K562 (cell line): ENCODE measurements at regions of chr11 and their contacts with region 1.

Region 1: GRCh38 chr11:74570266-74571061 is 21.9 kb upstream of the POLD3 start:
- DNase-seq: peak; percentile 67 to 74 (median 70)
- ATAC-seq: peak; percentile 96
- H3K4me3 ChIP-seq: no peak overlapping the region
- H3K27ac ChIP-seq: no peak overlapping the region
- H3K4me1 ChIP-seq: no peaks in the 10 kb centered on the region
- H3K27me3 ChIP-seq: peaks cover 12 to 13% of the 10 kb centered on the region in 2 experiments; a peak in 4 of 5 replicates
- CTCF ChIP-seq: peak; percentile 75 to 91 (median 81)
- EP300 ChIP-seq: no peak
- POLR2A ChIP-seq: no peak
- RAD21 ChIP-seq: peak; percentile 95 to 98

Region 2: DNA sequence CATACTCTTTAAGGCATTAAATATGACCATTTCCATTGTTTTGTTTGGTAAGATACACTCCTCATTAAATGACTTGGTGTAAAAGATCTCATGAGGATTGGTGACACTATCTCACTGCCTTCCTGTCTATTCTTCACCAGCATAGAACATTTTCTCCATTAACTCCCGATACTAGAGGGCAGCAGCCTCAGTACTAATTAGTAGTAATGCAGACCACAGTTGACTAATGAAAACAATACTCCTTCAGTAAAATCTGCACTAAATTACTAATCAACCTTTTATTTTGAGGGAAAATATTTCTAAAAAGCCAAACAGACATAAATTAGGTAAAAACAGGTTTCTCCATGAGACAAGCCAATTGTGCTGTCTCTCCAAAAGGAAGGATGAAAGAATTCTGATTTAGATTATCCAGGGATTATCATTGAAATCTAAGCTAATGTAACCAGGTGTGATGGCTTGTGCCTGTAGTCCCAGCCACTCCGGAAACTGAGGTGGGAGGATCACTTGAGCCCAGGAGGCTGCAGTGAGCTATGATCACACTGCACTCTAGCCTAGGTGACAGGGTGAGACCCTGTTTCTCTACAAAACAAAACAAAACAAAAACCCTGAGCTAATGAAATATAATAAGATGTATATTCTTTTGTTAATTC is 181.7 kb before region 1 on chr11:
- CTCF ChIA-PET with region 1: interaction called, 4 read pairs
- POLR2A ChIA-PET with region 1: no interaction called
- in situ Hi-C with region 1: no loop called
- intact Hi-C with region 1: loop called (anchors 2 kb)
- DNase-seq: peak; percentile 31 to 72 (median 36)
- ATAC-seq: peak; percentile 89
- H3K4me3 ChIP-seq: no peak overlapping the region
- H3K27ac ChIP-seq: no peak overlapping the region
- H3K4me1 ChIP-seq: no peaks in the 10 kb centered on the region; a peak in 1 of 5 replicates
- H3K27me3 ChIP-seq: no peaks in the 10 kb centered on the region; a peak in 1 of 5 replicates
- CTCF ChIP-seq: peak; percentile 65 to 81 (median 65); a peak in 5 of 6 replicates
- EP300 ChIP-seq: no peak
- POLR2A ChIP-seq: no peak
- RAD21 ChIP-seq: peak; percentile 75 to 87